ENCODE measurements at regions of chr11 and their contacts with region 1.

Region 1: GRCh38 chr11:32162351-32162750 is 71.5 kb downstream of the RCN1 start:
- DNase-seq: no peak
- ATAC-seq: no peak
- H3K4me3 Mint-ChIP-seq: no peak overlapping the region
- H3K27ac Mint-ChIP-seq: no peak overlapping the region
- H3K4me1 Mint-ChIP-seq: no peaks in the 10 kb centered on the region
- H3K27me3 Mint-ChIP-seq: peaks cover 9% of the 10 kb centered on the region

Region 2: DNA sequence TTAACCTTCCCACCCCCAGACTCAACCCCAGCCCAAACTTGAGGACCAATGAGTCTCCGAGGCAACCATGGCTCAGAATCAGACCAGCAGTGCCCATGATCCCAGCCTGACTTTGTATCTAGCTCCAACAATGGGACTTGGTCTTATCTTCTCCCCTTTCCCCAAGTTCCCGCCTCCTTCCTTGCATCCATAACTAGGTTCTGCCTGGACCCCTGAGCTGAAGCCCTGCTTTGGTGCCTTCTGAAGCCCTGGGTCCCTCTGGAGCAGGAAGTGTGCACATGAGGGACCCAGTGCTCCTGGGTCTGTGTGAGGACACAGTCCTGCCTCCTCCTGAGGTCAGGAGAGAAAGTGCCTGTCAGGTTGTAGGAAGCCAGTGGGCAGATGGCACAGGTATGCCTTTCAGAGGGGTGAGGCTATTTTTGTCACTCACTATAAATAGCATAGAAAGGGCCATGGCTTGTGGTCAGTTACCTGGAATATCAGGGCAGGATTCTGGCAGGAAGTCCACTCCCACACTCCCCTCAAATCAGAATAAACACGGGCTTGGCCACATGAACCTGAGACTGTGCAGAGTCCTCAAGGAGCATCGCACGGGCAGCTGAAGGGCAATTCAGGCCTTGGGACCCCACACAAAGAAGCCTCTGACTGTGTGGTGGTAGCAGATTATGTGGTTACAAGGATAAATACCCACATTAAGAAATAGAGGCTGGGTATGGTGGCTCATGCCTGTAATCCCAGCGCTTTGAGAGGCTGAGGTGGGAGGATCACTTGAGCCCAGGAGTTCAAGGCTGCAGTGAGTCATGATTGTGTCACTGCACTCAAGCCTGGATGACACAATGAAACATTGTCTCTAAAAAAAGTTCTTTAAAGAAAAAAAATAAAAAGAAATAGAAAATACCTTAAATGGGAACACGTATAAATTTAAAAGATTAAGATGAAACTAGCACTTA is 44.1 kb before region 1 on chr11:
- CTCF ChIA-PET with region 1: no interaction called
- POLR2A ChIA-PET with region 1: no interaction called
- intact Hi-C with region 1: no loop called
- DNase-seq: no peak
- ATAC-seq: no peak
- H3K4me3 Mint-ChIP-seq: no peak overlapping the region
- H3K27ac Mint-ChIP-seq: no peak overlapping the region
- H3K4me1 Mint-ChIP-seq: peaks cover 5% of the 10 kb centered on the region
- H3K27me3 Mint-ChIP-seq: peaks cover 22% of the 10 kb centered on the region

Region 3: DNA sequence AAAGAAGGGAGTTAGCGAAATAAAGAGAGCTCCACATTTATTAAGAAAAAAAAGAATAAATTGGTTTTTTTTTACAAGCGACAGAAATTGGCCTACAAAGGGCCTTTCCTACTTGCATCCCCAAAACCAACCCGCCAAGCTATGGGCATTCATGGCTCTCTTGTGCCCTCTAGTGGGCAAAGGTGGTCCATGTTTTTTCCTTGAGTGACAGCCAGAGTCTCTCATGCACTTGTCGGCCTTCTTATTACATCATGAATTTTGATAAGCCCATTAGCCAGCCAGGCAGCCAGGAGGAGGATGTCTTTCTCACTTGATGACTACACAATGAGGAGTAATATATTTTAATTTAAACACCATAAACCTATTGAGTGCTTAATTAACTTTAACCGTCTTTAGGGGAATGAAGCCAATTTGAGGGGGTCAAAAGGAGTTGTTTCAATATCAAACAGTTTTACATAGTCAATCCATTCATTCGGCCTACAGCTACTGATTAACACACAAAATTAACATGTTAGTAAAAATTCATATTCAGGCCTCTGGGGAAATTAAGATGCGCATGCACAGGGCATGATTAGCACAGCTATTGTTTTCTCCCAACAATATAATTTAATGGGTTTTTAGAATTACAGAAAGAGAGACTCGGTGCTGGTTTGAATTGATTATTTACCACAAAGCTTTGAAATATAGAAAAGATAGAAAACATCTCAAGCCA is 14.0 kb after region 1 on chr11:
- CTCF ChIA-PET with region 1: interaction called, 30 read pairs
- POLR2A ChIA-PET with region 1: no interaction called
- intact Hi-C with region 1: no loop called
- DNase-seq: peak; percentile 85
- ATAC-seq: peak; percentile 78
- H3K4me3 Mint-ChIP-seq: no peak overlapping the region
- H3K27ac Mint-ChIP-seq: no peak overlapping the region
- H3K4me1 Mint-ChIP-seq: no peaks in the 10 kb centered on the region
- H3K27me3 Mint-ChIP-seq: peaks cover 7% of the 10 kb centered on the region

Region 4: DNA sequence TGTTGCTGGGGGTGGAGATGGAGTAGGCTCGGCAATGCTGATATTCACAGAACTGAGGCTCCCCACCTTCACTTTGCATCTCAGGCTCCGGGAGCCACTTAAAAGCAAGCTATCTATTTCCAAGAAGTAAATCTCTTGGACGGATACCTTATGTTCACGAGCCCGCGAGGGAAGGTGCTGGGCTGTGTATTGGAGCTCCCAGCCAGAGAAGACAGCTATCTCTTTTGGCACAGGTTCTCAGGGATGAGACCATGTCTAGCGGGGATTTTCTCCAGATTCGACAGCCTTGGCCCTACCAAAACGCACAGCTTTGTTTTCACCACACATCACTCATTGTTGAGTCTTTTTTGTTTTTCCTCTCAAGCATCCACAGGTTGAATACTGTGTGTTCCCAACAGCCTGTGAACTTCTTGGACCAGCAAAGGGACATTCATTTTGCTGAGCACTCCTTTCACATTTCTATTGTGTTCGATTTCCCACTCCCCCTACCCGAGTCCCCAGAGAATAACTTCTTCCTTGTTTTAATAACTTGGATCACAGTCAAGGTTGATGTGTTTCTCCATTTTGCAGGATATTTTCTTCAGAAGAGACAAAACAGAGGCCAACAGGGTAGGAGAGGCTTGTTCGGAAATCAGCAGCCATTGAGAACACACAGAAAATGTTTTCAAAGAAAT is 249.7 kb after region 1 on chr11:
- CTCF ChIA-PET with region 1: no interaction called
- POLR2A ChIA-PET with region 1: no interaction called
- intact Hi-C with region 1: no loop called
- DNase-seq: no peak
- ATAC-seq: no peak
- H3K4me3 Mint-ChIP-seq: no peak overlapping the region
- H3K27ac Mint-ChIP-seq: no peak overlapping the region
- H3K4me1 Mint-ChIP-seq: no peaks in the 10 kb centered on the region
- H3K27me3 Mint-ChIP-seq: peaks cover 5% of the 10 kb centered on the region

Region 5: GRCh38 chr11:32884770-32885384 is 722.5 kb after region 1 on chr11:
- CTCF ChIA-PET with region 1: no interaction called
- POLR2A ChIA-PET with region 1: no interaction called
- intact Hi-C with region 1: no loop called
- DNase-seq: peak; percentile 17
- ATAC-seq: peak; percentile 70
- H3K4me3 Mint-ChIP-seq: no peak overlapping the region
- H3K27ac Mint-ChIP-seq: no peak overlapping the region
- H3K4me1 Mint-ChIP-seq: no peaks in the 10 kb centered on the region
- H3K27me3 Mint-ChIP-seq: no peaks in the 10 kb centered on the region